ENCODE measurements at regions of chr15 and their contacts with region 1.

Region 1: GRCh38 chr15:44319385-44319784 is 30.9 kb downstream of the GOLM2 start:
- DNase-seq: peak; percentile 47
- ATAC-seq: peak; percentile 98
- H3K4me3 ChIP-seq: no peak overlapping the region
- H3K27ac ChIP-seq: peak overlapping the region; percentile 71
- H3K4me1 ChIP-seq: peaks cover 5% of the 10 kb centered on the region
- H3K27me3 ChIP-seq: no peaks in the 10 kb centered on the region
- CTCF ChIP-seq: peak; percentile 76 to 81 (median 80)
- EP300 ChIP-seq: no peak
- POLR2A ChIP-seq: no peak
- RAD21 ChIP-seq: peak; percentile 83

Region 2: GRCh38 chr15:44066316-44066740 is 253.1 kb before region 1 on chr15:
- CTCF ChIA-PET with region 1: interaction called, 22 read pairs
- POLR2A ChIA-PET with region 1: no interaction called
- RAD21 ChIA-PET with region 1: interaction called, 8 read pairs
- SMC1A ChIA-PET with region 1: interaction called, 16 read pairs
- in situ Hi-C with region 1: no loop called
- intact Hi-C with region 1: loop called (anchors 5 kb)
- DNase-seq: peak; percentile 25
- ATAC-seq: peak; percentile 87
- H3K4me3 ChIP-seq: no peak overlapping the region
- H3K27ac ChIP-seq: no peak overlapping the region
- H3K4me1 ChIP-seq: no peaks in the 10 kb centered on the region
- H3K27me3 ChIP-seq: no peaks in the 10 kb centered on the region
- CTCF ChIP-seq: peak; percentile 67 to 76 (median 71)
- EP300 ChIP-seq: no peak
- POLR2A ChIP-seq: no peak
- RAD21 ChIP-seq: peak; percentile 90

Region 3: GRCh38 chr15:44265757-44266156 is 53.6 kb before region 1 on chr15:
- CTCF ChIA-PET with region 1: interaction called, 5 read pairs
- POLR2A ChIA-PET with region 1: no interaction called
- RAD21 ChIA-PET with region 1: interaction called, 14 read pairs
- SMC1A ChIA-PET with region 1: interaction called, 5 read pairs
- in situ Hi-C with region 1: no loop called
- intact Hi-C with region 1: loop called (anchors 2 kb)
- DNase-seq: no peak
- ATAC-seq: peak; percentile 55
- H3K4me3 ChIP-seq: no peak overlapping the region
- H3K27ac ChIP-seq: no peak overlapping the region
- H3K4me1 ChIP-seq: no peaks in the 10 kb centered on the region
- H3K27me3 ChIP-seq: no peaks in the 10 kb centered on the region
- CTCF ChIP-seq: peak in 2 of 3 experiments; percentile 20 to 35; a peak in 1 of 6 replicates
- EP300 ChIP-seq: no peak
- POLR2A ChIP-seq: no peak
- RAD21 ChIP-seq: peak; percentile 66

Region 4: GRCh38 chr15:44296625-44297524 is 22.5 kb before region 1 on chr15:
- CTCF ChIA-PET with region 1: interaction called, 68 read pairs
- POLR2A ChIA-PET with region 1: interaction called, 5 read pairs
- RAD21 ChIA-PET with region 1: interaction called, 6 read pairs
- SMC1A ChIA-PET with region 1: interaction called, 65 read pairs
- in situ Hi-C with region 1: no loop called
- intact Hi-C with region 1: no loop called
- DNase-seq: no peak
- ATAC-seq: peak; percentile 64
- H3K4me3 ChIP-seq: no peak overlapping the region
- H3K27ac ChIP-seq: peak overlapping the region; percentile 43
- H3K4me1 ChIP-seq: peaks cover 19% of the 10 kb centered on the region
- H3K27me3 ChIP-seq: no peaks in the 10 kb centered on the region
- CTCF ChIP-seq: no peak
- EP300 ChIP-seq: no peak
- POLR2A ChIP-seq: no peak
- RAD21 ChIP-seq: no peak

Region 5: DNA sequence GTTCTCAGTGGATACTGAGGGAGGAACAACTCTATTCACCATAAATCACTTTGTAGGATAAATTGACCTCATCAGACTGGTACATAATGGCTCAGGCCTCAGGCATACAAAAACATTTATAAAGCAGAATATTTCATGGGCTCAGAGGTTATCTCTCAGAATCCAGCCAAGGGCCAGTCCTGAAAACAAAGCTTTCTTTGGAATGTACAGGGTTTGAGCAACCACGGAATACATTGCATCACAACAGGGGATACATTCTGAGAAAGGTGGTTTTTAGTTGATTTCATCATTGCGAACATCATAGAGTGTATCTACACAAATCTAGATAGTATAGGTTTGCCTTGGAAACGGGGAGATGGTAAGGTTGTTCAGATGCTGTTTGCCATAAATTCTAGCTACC is 74.7 kb after region 1 on chr15:
- CTCF ChIA-PET with region 1: no interaction called
- POLR2A ChIA-PET with region 1: no interaction called
- RAD21 ChIA-PET with region 1: no interaction called
- SMC1A ChIA-PET with region 1: no interaction called
- in situ Hi-C with region 1: no loop called
- intact Hi-C with region 1: no loop called
- DNase-seq: no peak
- ATAC-seq: no peak
- H3K4me3 ChIP-seq: no peak overlapping the region
- H3K27ac ChIP-seq: no peak overlapping the region
- H3K4me1 ChIP-seq: no peaks in the 10 kb centered on the region
- H3K27me3 ChIP-seq: no peaks in the 10 kb centered on the region
- CTCF ChIP-seq: no peak
- EP300 ChIP-seq: no peak
- POLR2A ChIP-seq: no peak
- RAD21 ChIP-seq: no peak

Region 6: DNA sequence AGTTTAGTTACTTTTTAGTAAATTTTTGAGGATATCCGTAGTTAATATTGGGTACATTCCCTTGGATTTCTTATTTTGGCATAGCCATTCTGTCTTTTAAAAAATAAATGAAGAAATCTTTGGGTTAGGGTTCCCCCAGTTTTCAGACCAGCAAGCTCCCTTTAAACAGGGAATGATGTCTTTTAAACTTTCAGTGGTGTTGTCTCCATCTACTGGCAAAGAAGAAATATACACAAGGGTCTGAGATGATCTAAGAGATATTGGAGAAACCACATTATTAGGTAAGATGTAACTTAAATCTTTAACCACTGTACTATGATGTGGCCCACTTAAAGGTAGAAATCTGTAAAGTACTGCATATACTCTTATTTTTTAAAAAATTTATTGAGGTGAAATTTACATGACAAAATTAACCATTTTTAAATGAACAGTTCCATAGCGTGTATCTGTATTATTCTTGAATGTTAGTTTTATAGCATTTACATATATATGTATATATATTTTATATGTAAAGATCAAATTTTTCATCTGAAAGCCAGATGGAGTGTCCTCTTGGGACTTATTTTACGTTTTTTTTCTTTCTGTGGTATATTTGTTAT is 182.5 kb after region 1 on chr15:
- CTCF ChIA-PET with region 1: interaction called, 12 read pairs
- POLR2A ChIA-PET with region 1: no interaction called
- RAD21 ChIA-PET with region 1: interaction called, 14 read pairs
- SMC1A ChIA-PET with region 1: interaction called, 6 read pairs
- in situ Hi-C with region 1: no loop called
- intact Hi-C with region 1: loop called (anchors 10 kb)
- DNase-seq: no peak
- ATAC-seq: peak; percentile 80
- H3K4me3 ChIP-seq: no peak overlapping the region
- H3K27ac ChIP-seq: no peak overlapping the region
- H3K4me1 ChIP-seq: no peaks in the 10 kb centered on the region
- H3K27me3 ChIP-seq: no peaks in the 10 kb centered on the region
- CTCF ChIP-seq: peak; percentile 46 to 61 (median 54)
- EP300 ChIP-seq: no peak
- POLR2A ChIP-seq: no peak
- RAD21 ChIP-seq: peak; percentile 74

Measured in GM12878 (cell line).